ENCODE measurements at regions of chrX and their contacts with region 1.

Region 1: GRCh38 chrX:109797311-109797975 is 64.4 kb upstream of the ACSL4 start:
- DNase-seq: peak; percentile 17
- H3K4me3 Mint-ChIP-seq: no peak overlapping the region
- H3K27ac Mint-ChIP-seq: peak overlapping the region; percentile 8
- H3K4me1 Mint-ChIP-seq: peaks cover 15% of the 10 kb centered on the region
- H3K27me3 Mint-ChIP-seq: peaks cover 34% of the 10 kb centered on the region
- CTCF ChIP-seq: no peak

Region 2: DNA sequence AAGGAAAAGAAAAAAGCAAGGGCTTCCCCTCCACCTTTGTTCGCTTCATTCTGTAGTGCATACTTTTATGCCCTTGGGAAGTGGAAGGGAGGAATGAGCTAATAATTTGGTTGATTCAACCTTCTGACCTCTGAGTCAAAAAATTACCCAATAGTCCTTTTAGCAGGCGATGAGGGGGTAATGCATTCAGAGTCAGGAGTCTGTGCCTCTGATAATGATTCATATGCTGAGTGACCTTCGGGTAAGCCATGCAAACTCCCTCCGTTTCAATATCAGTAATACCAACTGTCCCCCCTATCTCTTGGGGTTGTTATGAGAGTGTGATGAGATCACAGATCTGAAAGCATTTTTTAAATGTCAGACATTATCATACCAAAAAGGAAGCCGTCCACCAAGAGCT is 22.7 kb before region 1 on chrX:
- CTCF ChIA-PET with region 1: no interaction called
- POLR2A ChIA-PET with region 1: interaction called, 11 read pairs
- intact Hi-C with region 1: no loop called
- DNase-seq: peak; percentile 81
- H3K4me3 Mint-ChIP-seq: no peak overlapping the region
- H3K27ac Mint-ChIP-seq: no peak overlapping the region
- H3K4me1 Mint-ChIP-seq: peaks cover 8% of the 10 kb centered on the region
- H3K27me3 Mint-ChIP-seq: peaks cover 38% of the 10 kb centered on the region
- CTCF ChIP-seq: no peak

Region 3: DNA sequence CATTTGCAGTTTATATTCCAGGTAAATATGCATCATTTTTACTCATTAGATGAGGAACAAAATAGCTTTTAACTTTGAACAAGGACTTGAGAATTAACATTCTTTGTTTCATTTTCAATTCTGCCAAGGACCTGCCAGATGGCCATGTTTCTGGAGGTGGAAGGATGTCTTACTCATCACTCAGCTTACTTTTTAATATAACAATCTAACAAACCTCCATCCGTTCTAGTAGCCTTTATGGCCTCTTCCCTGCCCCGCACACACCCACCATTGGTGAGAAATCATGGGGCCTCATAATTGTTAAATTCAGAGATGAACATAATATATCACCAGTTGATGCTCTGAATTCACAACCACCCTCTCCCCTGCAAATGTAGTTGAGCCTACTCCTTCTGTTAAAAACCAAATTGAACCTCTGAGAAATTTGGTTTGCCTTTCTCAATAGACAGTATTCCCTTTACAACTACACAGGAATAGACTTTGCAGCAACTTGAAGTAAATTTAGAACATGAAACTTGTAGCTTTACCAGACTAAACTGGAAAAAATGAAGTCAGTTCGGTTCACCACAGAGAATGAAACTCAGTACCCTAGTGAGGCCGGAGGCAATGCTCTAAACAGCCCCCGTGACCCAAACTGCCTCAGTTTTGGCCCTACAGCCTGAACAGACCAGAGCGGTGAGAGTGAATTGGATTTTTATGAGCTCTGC is 14.3 kb before region 1 on chrX:
- CTCF ChIA-PET with region 1: no interaction called
- POLR2A ChIA-PET with region 1: interaction called, 16 read pairs
- intact Hi-C with region 1: no loop called
- DNase-seq: no peak
- H3K4me3 Mint-ChIP-seq: peak overlapping the region; percentile 4
- H3K27ac Mint-ChIP-seq: no peak overlapping the region
- H3K4me1 Mint-ChIP-seq: peaks cover 11% of the 10 kb centered on the region
- H3K27me3 Mint-ChIP-seq: peaks cover 57% of the 10 kb centered on the region
- CTCF ChIP-seq: no peak